CD8-positive, alpha-beta T cell (primary cell): ENCODE measurements at regions of chr19 and their contacts with region 1.

Region 1: GRCh38 chr19:49817964-49818648 is at the start of gene MED25:
- DNase-seq: peak; percentile 78 to 94 (median 87)
- ATAC-seq: peak; percentile 64
- H3K4me3 ChIP-seq: peak within 1 kb of the TSS; percentile 85 to 91
- H3K4me3 Mint-ChIP-seq: peak within 1 kb of the TSS; percentile 99
- H3K27ac ChIP-seq: peak within 1 kb of the TSS; percentile 95 to 98
- H3K27ac Mint-ChIP-seq: peak within 1 kb of the TSS; percentile 100
- H3K4me1 ChIP-seq: peaks cover 13% of the 10 kb centered on the region
- H3K4me1 Mint-ChIP-seq: peaks cover 30% of the 10 kb centered on the region
- H3K27me3 ChIP-seq: no peaks in the 10 kb centered on the region
- H3K27me3 Mint-ChIP-seq: no peaks in the 10 kb centered on the region
- CTCF ChIP-seq: peak; percentile 19
- total RNA-seq, gene MED25: 41.9 to 42.1 TPM

Region 2: DNA sequence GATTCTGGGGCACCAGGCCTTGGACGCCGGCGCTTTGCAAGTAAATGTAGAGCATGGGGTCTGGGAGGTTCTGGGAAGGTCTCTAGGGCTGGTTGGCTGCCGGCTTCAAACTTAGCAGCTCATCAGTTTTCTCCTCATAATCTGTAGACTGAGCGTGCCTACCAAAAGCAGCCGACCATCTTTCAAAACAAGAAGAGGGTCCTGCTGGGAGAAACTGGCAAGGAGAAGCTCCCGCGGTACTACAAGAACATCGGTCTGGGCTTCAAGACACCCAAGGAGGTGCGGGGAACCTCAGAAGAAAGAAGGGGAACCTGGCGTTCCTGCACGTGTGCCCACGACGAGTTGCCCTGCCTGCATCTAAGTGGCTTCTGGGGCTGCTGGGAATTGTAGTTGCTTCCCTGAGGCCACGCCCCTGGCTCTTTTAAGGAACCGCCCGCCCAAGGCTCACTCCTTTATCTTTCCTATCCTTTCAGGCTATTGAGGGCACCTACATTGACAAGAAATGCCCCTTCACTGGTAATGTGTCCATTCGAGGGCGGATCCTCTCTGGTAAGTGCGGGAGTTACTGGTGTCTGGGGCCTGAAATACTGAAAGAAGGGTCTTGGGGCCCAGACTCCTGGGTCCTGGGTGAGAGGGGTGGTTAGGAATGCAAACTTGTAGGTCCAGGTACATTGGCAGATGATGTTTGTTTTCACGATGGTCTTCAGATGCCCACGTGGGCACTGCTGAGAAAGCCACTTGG is 320.9 kb before region 1 on chr19:
- CTCF ChIA-PET with region 1: no interaction called
- POLR2A ChIA-PET with region 1: no interaction called
- intact Hi-C with region 1: loop called in 1 of 2 experiments (anchors 2 kb)
- DNase-seq: peak; percentile 54 to 91 (median 78)
- ATAC-seq: peak; percentile 9
- H3K4me3 ChIP-seq: peak overlapping the region; percentile 95 to 96
- H3K4me3 Mint-ChIP-seq: peak overlapping the region; percentile 100
- H3K27ac ChIP-seq: peak overlapping the region; percentile 95 to 98
- H3K27ac Mint-ChIP-seq: peak overlapping the region; percentile 98
- H3K4me1 ChIP-seq: peaks cover 39% of the 10 kb centered on the region
- H3K4me1 Mint-ChIP-seq: peaks cover 59% of the 10 kb centered on the region
- H3K27me3 ChIP-seq: no peaks in the 10 kb centered on the region
- H3K27me3 Mint-ChIP-seq: no peaks in the 10 kb centered on the region
- CTCF ChIP-seq: no peak

Region 3: DNA sequence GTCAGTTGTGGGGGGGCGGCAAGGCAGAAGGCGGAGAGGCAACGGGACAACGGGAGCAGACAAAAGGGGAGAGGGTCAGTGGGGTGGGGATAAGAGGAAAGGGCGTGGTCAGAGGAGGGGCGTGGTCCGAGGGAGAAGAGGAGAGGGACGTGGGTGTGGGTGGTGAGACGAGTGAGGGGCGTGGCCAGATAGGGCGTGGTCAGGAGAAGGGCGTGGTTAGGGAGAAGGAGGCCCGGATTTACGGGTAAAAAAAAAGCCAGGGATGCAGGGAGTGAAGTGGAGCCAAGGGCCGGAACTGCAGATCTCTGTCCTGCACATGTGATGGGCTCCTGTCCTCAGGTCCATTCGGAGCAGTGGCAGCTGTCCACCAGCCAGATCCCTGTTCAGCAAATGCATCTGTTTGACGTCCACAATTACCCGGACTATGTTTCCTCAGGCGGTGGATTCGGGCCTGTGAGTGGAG is 105.7 kb before region 1 on chr19:
- CTCF ChIA-PET with region 1: interaction called, 6 read pairs
- POLR2A ChIA-PET with region 1: interaction called, 7 read pairs
- intact Hi-C with region 1: loop called (anchors 1 to 2 kb)
- DNase-seq: no peak
- ATAC-seq: no peak
- H3K4me3 ChIP-seq: no peak overlapping the region
- H3K4me3 Mint-ChIP-seq: no peak overlapping the region
- H3K27ac ChIP-seq: no peak overlapping the region
- H3K27ac Mint-ChIP-seq: no peak overlapping the region
- H3K4me1 ChIP-seq: peaks cover 4% of the 10 kb centered on the region
- H3K4me1 Mint-ChIP-seq: peaks cover 3% of the 10 kb centered on the region
- H3K27me3 ChIP-seq: no peaks in the 10 kb centered on the region
- H3K27me3 Mint-ChIP-seq: peaks cover 3% of the 10 kb centered on the region
- CTCF ChIP-seq: no peak

Region 4: GRCh38 chr19:49766007-49766937 is 51.8 kb before region 1 on chr19:
- CTCF ChIA-PET with region 1: no interaction called
- POLR2A ChIA-PET with region 1: interaction called, 6 read pairs
- intact Hi-C with region 1: loop called (anchors 1 kb)
- DNase-seq: peak; percentile 97 to 100 (median 99)
- ATAC-seq: peak; percentile 87
- H3K4me3 ChIP-seq: peak overlapping the region; percentile 62 to 76
- H3K4me3 Mint-ChIP-seq: peak overlapping the region; percentile 82
- H3K27ac ChIP-seq: peak overlapping the region; percentile 66 to 87
- H3K27ac Mint-ChIP-seq: peak overlapping the region; percentile 93
- H3K4me1 ChIP-seq: peaks cover 24% of the 10 kb centered on the region
- H3K4me1 Mint-ChIP-seq: peaks cover 38% of the 10 kb centered on the region
- H3K27me3 ChIP-seq: no peaks in the 10 kb centered on the region
- H3K27me3 Mint-ChIP-seq: no peaks in the 10 kb centered on the region
- CTCF ChIP-seq: no peak

Region 5: DNA sequence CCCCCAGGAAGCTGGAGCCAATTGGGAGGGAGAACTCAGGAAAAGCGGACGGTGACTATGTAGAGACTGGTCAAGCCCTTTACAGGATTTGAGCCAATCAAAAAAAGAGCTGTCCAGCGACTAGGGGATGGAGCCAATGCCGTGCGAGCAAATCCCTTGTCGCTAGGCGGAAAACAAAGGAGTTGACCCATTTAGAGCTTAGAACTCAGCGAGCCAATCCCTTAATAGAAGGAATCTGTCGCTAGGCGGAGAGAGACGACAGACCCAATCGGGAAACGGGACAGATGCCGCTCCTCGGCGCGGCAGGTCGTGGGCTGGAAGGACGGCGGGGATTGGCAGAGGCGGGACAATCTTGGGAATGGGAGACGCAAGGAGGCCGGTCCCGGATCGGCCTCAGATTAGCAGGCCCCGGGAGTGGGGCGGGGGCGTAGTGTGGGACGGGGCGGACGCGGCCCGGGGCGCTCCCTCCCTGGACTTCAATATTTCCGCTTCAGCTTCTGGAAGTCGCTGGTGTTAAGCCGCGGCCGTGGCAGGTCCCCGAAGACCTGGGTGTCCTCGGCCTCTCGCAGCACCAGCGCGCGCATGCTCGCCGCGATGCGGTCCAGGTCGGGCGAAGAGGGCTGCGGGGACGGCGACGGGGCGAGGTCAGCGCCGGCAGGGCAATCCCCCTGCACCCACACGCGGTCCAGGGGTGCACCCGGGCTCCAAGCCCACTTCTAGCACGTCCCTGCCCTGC is 51.5 kb after region 1 on chr19:
- CTCF ChIA-PET with region 1: no interaction called
- POLR2A ChIA-PET with region 1: interaction called, 5 read pairs
- intact Hi-C with region 1: loop called (anchors 1 kb)
- DNase-seq: peak; percentile 81 to 98 (median 89)
- ATAC-seq: peak; percentile 75
- H3K4me3 ChIP-seq: peak overlapping the region; percentile 73 to 85
- H3K4me3 Mint-ChIP-seq: no peak overlapping the region
- H3K27ac ChIP-seq: peak overlapping the region; percentile 64 to 96
- H3K27ac Mint-ChIP-seq: no peak overlapping the region
- H3K4me1 ChIP-seq: peaks cover 36% of the 10 kb centered on the region
- H3K4me1 Mint-ChIP-seq: peaks cover 41% of the 10 kb centered on the region
- H3K27me3 ChIP-seq: no peaks in the 10 kb centered on the region
- H3K27me3 Mint-ChIP-seq: no peaks in the 10 kb centered on the region
- CTCF ChIP-seq: no peak

Region 6: GRCh38 chr19:50025024-50025789 is 207.1 kb after region 1 on chr19 and contains the start of gene VRK3:
- CTCF ChIA-PET with region 1: no interaction called
- POLR2A ChIA-PET with region 1: no interaction called
- intact Hi-C with region 1: loop called in 1 of 2 experiments (anchors 1 kb)
- DNase-seq: peak; percentile 95 to 100 (median 97)
- ATAC-seq: peak; percentile 86
- H3K4me3 ChIP-seq: peak within 1 kb of the TSS; percentile 88 to 98
- H3K4me3 Mint-ChIP-seq: peak within 1 kb of the TSS; percentile 90
- H3K27ac ChIP-seq: peak within 1 kb of the TSS; percentile 98
- H3K27ac Mint-ChIP-seq: peak within 1 kb of the TSS; percentile 98
- H3K4me1 ChIP-seq: peaks cover 29% of the 10 kb centered on the region
- H3K4me1 Mint-ChIP-seq: peaks cover 53% of the 10 kb centered on the region
- H3K27me3 ChIP-seq: no peaks in the 10 kb centered on the region
- H3K27me3 Mint-ChIP-seq: no peaks in the 10 kb centered on the region
- CTCF ChIP-seq: no peak
- total RNA-seq, gene VRK3: 71.1 to 73.1 TPM